A673 (cell line): ENCODE measurements at regions of chr7 and their contacts with region 1.

Region 1: GRCh38 chr7:543501-544337 is 24.1 kb upstream of the PDGFA start:
- DNase-seq: no peak
- H3K4me3 ChIP-seq: no peak overlapping the region
- H3K27ac ChIP-seq: no peak overlapping the region
- H3K4me1 ChIP-seq: no peaks in the 10 kb centered on the region
- H3K27me3 ChIP-seq: no peaks in the 10 kb centered on the region
- CTCF ChIP-seq: no peak

Region 2: DNA sequence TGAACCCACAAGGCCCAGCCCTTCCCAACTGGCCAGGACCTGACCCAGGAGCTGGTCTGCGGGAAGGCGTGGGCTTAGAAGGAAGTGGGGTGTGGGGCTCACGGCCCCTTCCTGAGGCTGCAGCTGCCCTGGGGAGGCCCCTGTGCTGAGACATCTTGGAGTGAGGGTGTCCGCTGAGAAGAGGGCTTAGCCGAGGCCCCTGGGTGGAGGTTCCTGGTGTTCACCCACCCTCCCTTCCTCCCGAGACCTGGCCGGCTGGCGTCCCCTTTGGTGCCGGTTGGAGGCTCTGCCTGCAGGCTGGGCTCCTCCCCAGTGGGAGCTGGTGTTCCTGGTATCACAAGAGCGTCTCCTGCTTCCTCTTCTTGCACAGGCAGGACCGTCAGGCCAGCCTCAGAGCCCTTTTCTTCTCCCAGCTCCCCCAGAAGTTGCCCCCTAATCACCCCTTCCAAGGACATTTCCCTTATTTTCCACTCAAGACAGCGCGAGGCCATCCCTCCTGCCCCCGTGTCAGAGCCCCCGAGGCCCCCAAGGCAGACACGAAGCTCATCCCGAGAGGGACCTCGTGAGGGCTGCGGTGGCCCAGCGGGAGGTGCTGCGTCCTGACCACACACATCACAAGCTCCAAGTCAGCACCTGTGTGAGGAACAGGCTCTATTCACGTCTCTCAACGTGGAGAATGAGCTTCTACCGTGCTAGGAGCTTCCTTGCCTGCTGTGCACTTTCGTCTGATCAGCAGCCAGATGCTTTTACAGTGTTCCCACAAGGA is 376.4 kb before region 1 on chr7:
- CTCF ChIA-PET with region 1: no interaction called
- POLR2A ChIA-PET with region 1: no interaction called
- intact Hi-C with region 1: no loop called
- DNase-seq: no peak
- H3K4me3 ChIP-seq: no peak overlapping the region
- H3K27ac ChIP-seq: no peak overlapping the region
- H3K4me1 ChIP-seq: no peaks in the 10 kb centered on the region
- H3K27me3 ChIP-seq: no peaks in the 10 kb centered on the region
- CTCF ChIP-seq: no peak

Region 3: DNA sequence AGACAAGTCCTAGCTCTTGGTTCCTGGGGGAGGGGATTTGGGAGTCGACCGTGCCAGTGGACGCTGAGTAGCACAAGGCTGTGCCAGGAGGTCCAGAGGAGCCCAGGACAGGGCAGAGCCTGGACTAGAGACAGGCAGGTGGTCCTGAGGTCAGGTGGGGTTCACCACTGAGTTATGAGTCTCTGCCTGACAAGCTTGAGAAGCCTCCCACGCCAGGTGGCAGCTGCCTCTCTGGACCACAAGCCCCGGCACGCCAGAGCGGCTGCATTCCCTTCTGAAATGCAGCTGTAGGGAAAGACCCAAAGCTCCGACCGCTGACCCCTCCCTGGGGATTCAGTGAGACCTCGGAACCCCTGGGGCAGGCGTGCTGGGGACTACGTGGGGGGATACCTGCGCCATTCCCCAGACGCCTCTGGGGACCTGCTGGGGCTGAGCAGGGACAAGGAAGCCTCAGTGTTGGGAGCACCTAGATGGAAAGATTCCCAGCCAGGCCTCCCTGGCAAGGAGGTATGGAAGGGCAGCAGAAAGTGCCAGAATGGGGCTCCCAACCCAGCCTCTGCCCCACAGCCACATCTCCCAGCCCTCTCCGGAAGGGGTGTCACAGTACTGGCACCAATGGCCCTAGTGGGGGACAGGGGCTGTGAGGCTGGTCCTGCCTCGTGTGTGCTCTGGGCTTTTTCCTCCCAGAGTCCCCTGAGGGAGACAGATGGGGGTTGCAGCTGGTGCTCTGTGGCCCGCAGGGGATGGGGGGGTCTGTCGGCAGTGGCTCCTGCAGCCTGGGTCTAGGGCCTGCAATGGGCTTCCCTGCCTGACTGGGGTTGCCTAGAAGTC is 53.0 kb before region 1 on chr7:
- CTCF ChIA-PET with region 1: no interaction called
- POLR2A ChIA-PET with region 1: no interaction called
- intact Hi-C with region 1: no loop called
- DNase-seq: no peak
- H3K4me3 ChIP-seq: no peak overlapping the region
- H3K27ac ChIP-seq: no peak overlapping the region
- H3K4me1 ChIP-seq: no peaks in the 10 kb centered on the region
- H3K27me3 ChIP-seq: no peaks in the 10 kb centered on the region
- CTCF ChIP-seq: no peak

Region 4: GRCh38 chr7:604001-604883 is 60.5 kb after region 1 on chr7:
- CTCF ChIA-PET with region 1: no interaction called
- POLR2A ChIA-PET with region 1: no interaction called
- intact Hi-C with region 1: no loop called
- DNase-seq: peak; percentile 93
- H3K4me3 ChIP-seq: peak overlapping the region; percentile 16
- H3K27ac ChIP-seq: peak overlapping the region; percentile 80
- H3K4me1 ChIP-seq: peaks cover 32% of the 10 kb centered on the region
- H3K27me3 ChIP-seq: no peaks in the 10 kb centered on the region
- CTCF ChIP-seq: no peak

Region 5: GRCh38 chr7:897771-898376 is 354.2 kb after region 1 on chr7:
- CTCF ChIA-PET with region 1: no interaction called
- POLR2A ChIA-PET with region 1: no interaction called
- intact Hi-C with region 1: no loop called
- DNase-seq: no peak
- H3K4me3 ChIP-seq: no peak overlapping the region
- H3K27ac ChIP-seq: no peak overlapping the region
- H3K4me1 ChIP-seq: peaks cover 8% of the 10 kb centered on the region
- H3K27me3 ChIP-seq: no peaks in the 10 kb centered on the region
- CTCF ChIP-seq: no peak

Region 6: GRCh38 chr7:974161-974560 is 430.4 kb after region 1 on chr7:
- CTCF ChIA-PET with region 1: no interaction called
- POLR2A ChIA-PET with region 1: interaction called, 15 read pairs
- intact Hi-C with region 1: no loop called
- DNase-seq: no peak
- H3K4me3 ChIP-seq: peak overlapping the region; percentile 100
- H3K27ac ChIP-seq: peak overlapping the region; percentile 98
- H3K4me1 ChIP-seq: peaks cover 12% of the 10 kb centered on the region
- H3K27me3 ChIP-seq: no peaks in the 10 kb centered on the region
- CTCF ChIP-seq: no peak